Mammary epithelial cell (primary cell): ENCODE measurements at regions of chr1 and their contacts with region 1.

Region 1: GRCh38 chr1:215526553-215527151 is 40.5 kb upstream of the KCTD3 start:
- DNase-seq: peak; percentile 28
- H3K4me3 ChIP-seq: no peak overlapping the region
- H3K27ac ChIP-seq: no peak overlapping the region
- H3K4me1 ChIP-seq: no peaks in the 10 kb centered on the region
- H3K27me3 ChIP-seq: no peaks in the 10 kb centered on the region
- CTCF ChIP-seq: peak; percentile 36 to 56

Region 2: DNA sequence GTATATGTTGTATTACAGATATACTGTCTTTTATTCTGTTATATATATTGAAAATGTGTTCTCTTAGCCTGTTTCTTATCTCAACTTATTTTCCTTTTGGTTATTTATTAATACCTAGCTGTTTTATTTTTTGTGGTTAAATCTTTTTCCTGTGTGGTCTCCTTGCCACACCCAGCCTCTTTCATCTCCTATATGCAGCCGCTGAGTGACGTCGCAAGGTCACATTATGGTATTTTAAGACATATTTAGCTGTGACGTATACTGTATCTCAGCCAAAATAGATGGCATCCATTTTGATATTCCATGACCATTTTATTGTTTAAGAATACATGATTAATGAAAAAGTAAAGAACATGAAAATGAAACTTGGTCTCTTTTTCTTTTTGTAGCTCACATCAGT is 894.6 kb before region 1 on chr1:
- CTCF ChIA-PET with region 1: no interaction called
- dilution Hi-C with region 1: no loop called
- in situ Hi-C with region 1: no loop called
- intact Hi-C with region 1: loop called (anchors 1 kb)
- DNase-seq: no peak
- H3K4me3 ChIP-seq: no peak overlapping the region
- H3K27ac ChIP-seq: no peak overlapping the region
- H3K4me1 ChIP-seq: no peaks in the 10 kb centered on the region
- H3K27me3 ChIP-seq: no peaks in the 10 kb centered on the region
- CTCF ChIP-seq: no peak

Region 3: DNA sequence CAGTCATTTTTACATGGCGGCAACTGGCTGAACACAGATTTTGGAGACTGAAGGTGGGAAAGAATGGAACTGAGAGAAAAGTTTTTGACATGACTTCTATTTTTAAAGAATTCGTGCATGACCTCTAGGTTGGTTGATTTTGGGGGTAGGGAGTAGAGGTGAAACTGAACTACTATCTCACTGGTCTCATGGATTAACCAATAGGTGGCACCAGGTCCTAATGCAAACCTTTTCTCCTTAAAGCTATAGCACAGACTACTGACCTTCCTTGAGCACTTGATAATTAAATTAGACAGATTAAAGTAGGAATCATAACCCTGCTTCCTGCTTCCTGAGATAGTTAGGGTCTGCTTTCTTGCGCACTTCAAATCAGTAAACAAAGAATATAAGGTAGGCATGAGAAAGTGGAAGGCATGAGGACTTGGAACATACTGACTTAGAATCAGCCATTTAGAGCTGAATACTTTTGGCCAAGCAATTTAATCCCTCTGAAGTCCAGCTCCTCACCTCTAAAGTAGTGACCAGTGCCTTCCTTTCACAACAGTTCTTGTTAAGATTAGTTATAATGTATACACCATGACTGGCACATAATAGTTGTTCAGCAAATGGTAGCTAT is 717.7 kb before region 1 on chr1:
- CTCF ChIA-PET with region 1: no interaction called
- dilution Hi-C with region 1: no loop called
- in situ Hi-C with region 1: loop called (anchors 5 to 10 kb)
- intact Hi-C with region 1: loop called (anchors 1 kb)
- DNase-seq: peak; percentile 40
- H3K4me3 ChIP-seq: no peak overlapping the region
- H3K27ac ChIP-seq: no peak overlapping the region
- H3K4me1 ChIP-seq: no peaks in the 10 kb centered on the region
- H3K27me3 ChIP-seq: no peaks in the 10 kb centered on the region
- CTCF ChIP-seq: peak; percentile 48 to 71

Region 4: DNA sequence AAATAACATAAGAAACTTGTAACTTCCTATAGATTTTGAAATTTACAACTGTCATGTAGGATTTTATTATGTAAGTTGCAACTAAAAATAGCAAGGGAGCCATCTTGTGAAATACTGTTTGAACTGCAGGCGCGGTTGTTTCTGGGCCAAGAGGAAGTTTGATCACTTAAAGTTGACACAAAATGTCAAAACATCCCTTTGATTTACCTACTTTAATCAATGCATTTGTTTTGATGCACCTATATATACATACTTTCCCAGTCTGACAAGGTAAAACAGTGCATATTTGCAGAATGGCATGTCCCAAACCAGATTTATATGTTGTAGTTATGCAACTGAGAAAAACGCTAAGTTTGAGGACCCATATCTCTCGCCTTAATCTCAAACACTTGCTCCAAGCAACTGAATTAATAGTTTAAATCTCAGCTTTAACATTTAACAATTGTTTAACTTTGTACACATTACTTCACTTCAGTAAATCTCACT is 380.3 kb before region 1 on chr1:
- CTCF ChIA-PET with region 1: no interaction called
- dilution Hi-C with region 1: no loop called
- in situ Hi-C with region 1: no loop called
- intact Hi-C with region 1: loop called (anchors 2 kb)
- DNase-seq: peak; percentile 10
- H3K4me3 ChIP-seq: no peak overlapping the region
- H3K27ac ChIP-seq: no peak overlapping the region
- H3K4me1 ChIP-seq: no peaks in the 10 kb centered on the region
- H3K27me3 ChIP-seq: no peaks in the 10 kb centered on the region
- CTCF ChIP-seq: peak; percentile 67 to 71

Region 5: DNA sequence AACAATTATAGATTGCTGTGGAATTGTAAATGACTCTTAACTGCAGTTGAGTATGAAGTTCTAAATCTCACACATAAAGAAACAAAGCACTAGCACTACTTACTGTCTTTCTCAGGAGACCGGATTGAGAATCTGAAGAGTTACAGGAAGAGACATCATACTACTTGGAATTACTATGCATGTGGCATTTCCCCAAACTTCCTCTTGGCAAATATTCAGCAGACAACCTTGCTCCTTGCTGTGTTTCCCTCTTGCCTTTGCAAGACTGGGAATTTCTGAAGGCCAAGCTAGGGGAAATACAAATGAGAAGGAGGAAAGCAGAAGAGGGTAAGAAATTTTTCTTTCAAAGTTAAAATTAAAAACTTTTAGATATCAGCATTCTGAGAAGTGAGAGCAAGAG is 133.2 kb before region 1 on chr1:
- CTCF ChIA-PET with region 1: no interaction called
- dilution Hi-C with region 1: no loop called
- in situ Hi-C with region 1: no loop called
- intact Hi-C with region 1: no loop called
- DNase-seq: no peak
- H3K4me3 ChIP-seq: no peak overlapping the region
- H3K27ac ChIP-seq: no peak overlapping the region
- H3K4me1 ChIP-seq: no peaks in the 10 kb centered on the region
- H3K27me3 ChIP-seq: no peaks in the 10 kb centered on the region
- CTCF ChIP-seq: no peak

Region 6: DNA sequence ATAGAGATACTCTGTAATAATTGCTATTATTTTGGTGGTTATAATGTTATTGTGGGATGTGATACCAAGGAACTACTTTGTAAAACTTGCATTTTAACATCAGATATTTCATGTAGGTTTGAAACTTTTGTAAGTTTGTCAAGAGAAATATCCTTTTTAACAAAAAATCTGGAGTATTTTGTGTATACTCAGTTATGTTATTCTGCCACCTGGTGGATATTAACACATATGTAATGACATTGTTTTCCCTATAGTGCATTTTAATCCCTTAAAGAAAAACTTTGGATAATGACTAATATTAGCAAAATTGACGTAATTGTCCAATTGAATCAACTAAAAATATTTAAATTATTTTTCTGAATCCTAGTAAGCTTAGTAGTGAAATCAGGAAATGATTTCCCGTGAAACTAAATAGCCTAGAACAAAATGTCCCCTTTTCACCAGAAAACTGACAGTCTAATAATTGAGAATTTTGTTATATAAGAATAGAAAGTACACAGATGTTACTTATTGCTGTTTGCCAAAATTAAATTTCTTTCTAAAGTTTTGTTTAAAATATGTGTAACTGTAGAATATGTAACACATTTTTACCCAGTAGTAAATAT is 80.0 kb after region 1 on chr1:
- CTCF ChIA-PET with region 1: interaction called, 4 read pairs
- dilution Hi-C with region 1: no loop called
- in situ Hi-C with region 1: no loop called
- intact Hi-C with region 1: loop called (anchors 1 kb)
- DNase-seq: no peak
- H3K4me3 ChIP-seq: no peak overlapping the region
- H3K27ac ChIP-seq: no peak overlapping the region
- H3K4me1 ChIP-seq: no peaks in the 10 kb centered on the region
- H3K27me3 ChIP-seq: no peaks in the 10 kb centered on the region
- CTCF ChIP-seq: peak; percentile 48 to 49